Right lobe of liver (tissue), 6 donors: ENCODE measurements at regions of chr11 and their contacts with region 1.

Region 1: DNA sequence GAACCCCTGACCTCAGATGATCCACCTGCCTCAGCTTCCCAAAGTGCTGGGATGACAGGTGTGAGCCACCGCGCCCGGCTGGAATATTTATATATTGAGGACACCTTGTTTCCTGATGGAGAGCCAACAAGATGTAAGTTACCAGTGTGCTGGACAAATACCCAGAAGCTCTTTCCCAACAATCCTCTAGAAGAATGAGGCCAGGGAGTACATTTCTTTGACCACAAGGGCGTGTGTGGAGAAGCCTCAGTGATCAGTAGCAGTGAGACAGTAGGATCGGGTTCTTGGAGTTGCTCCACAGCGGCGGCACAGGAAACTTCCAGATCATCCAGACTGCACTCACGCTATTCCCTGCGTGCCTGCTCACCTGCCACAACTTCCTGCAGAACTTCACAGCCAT is 10.3 kb upstream of the POLA2 start:
- DNase-seq: peak in 1 of 3 donors; percentile 38
- ATAC-seq: no peak
- H3K4me3 ChIP-seq: no peak overlapping the region
- H3K27ac ChIP-seq: no peak overlapping the region
- H3K4me1 ChIP-seq: peaks cover 0 to 15% (median 1%) of the 10 kb centered on the region in 4 donors
- H3K27me3 ChIP-seq: no peaks in the 10 kb centered on the region
- CTCF ChIP-seq: no peak
- POLR2A ChIP-seq: no peak

Region 2: DNA sequence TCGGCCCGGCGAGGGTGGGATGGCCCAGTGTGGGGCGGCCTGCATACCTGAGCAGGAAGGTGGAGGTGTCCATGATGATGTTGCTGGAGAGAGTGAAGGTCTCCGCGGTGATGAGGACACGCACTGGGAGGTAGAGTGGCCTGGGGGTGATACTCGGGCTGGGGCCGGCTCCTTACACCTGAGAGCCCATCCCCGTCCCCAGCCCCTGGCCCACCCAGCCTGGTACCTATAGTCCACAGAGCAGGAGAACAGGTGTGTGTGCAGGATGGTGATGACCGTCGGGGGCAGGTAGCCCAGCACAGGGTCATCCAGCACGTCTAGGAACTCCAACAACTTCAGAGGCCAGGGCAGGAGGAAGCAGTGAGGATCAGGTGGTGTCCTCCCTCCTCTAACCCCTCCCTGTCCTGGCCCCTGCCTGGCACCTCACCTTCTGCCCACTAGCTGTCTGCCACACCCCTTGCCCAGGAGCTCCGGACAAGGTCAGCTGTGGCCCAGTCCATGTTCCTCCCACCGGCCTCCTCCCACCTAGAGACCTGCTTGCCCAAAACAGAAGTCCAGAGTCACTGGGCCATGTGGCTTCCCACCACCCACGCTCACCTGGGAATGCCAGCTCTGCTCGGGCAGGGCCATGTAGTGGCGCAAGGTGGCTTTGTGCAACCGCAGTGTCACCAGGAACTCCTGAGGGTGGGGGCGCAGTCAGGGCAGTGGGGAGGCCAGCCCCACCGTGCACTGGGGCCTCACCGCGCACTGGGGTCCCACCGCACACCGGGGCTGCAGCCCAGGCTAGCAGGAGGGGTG is 345.8 kb before region 1 on chr11:
- intact Hi-C with region 1: no loop called
- DNase-seq: peak in 1 of 3 donors; percentile 47
- ATAC-seq: peak in 1 of 4 donors; percentile 30
- H3K4me3 ChIP-seq: no peak overlapping the region
- H3K27ac ChIP-seq: no peak overlapping the region
- H3K4me1 ChIP-seq: no peaks in the 10 kb centered on the region
- H3K27me3 ChIP-seq: no peaks in the 10 kb centered on the region
- CTCF ChIP-seq: no peak
- POLR2A ChIP-seq: no peak

Region 3: GRCh38 chr11:65111744-65112414 is 139.6 kb before region 1 on chr11 and contains the start of gene TM7SF2:
- intact Hi-C with region 1: loop called in 1 of 2 experiments (anchors 5 kb)
- DNase-seq: peak; percentile 98 to 99 (median 98)
- ATAC-seq: peak; percentile 80 to 89 (median 84)
- H3K4me3 ChIP-seq: peak within 1 kb of the TSS; percentile 54 to 62 (median 54)
- H3K27ac ChIP-seq: peak within 1 kb of the TSS; percentile 28 to 93 (median 69)
- H3K4me1 ChIP-seq: peaks cover 0 to 44% (median 24%) of the 10 kb centered on the region in 4 donors
- H3K27me3 ChIP-seq: no peaks in the 10 kb centered on the region
- CTCF ChIP-seq: no peak
- POLR2A ChIP-seq: peak; percentile 96
- total RNA-seq, gene TM7SF2: 25.6 to 112 (median 37.8) TPM

Region 4: DNA sequence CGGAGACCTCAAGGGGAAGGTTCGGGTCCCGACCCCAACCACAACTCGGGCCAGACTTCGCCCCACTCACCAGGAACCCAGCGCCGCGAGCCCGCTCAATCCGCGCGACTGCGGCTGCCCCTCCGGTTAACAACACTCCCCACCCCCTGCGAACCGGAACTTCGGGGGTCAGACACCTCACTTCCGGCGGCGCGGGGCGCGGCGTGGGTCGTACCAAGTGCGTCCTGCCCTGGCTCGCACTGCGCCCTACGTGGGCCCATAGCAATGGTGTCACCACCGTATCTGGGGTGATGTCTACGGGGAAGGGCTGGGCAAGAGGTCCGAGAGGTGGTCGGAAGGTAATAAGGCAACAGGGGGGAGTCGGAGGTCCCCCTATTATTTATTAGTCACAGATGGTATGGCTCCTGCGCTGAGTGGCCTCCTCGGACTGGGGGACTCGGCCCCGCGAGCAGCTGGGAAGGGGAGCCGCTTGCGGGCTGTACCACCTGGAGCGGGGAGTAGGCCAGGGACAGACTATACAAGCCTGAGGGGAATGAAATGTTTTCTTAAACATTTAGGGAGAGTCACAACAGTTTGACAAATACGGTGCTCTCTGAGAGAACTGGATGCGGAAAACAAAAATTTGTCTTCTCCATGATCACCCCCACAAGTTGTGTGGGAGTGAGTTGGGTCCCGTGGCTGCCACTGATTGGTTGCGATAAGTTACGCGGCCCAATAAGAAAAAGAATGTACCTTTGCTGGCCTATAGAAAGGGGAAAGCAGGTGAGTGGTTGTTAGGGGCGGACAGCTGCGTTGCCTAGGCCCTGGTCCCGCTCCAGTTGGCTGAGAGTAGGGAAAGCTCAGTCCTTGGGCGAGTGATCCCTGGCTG is 116.9 kb before region 1 on chr11 and contains the start of gene SYVN1:
- intact Hi-C with region 1: loop called in 1 of 2 experiments (anchors 10 kb)
- DNase-seq: peak; percentile 95 to 98 (median 97)
- ATAC-seq: peak; percentile 83 to 90 (median 86)
- H3K4me3 ChIP-seq: peak within 1 kb of the TSS; percentile 92 to 99 (median 99)
- H3K27ac ChIP-seq: peak within 1 kb of the TSS; percentile 96 to 99 (median 97)
- H3K4me1 ChIP-seq: peaks cover 0 to 25% (median 11%) of the 10 kb centered on the region in 4 donors
- H3K27me3 ChIP-seq: no peaks in the 10 kb centered on the region
- CTCF ChIP-seq: no peak
- POLR2A ChIP-seq: peak; percentile 97
- total RNA-seq, gene SYVN1: 73.0 to 120 (median 109) TPM

Region 5: DNA sequence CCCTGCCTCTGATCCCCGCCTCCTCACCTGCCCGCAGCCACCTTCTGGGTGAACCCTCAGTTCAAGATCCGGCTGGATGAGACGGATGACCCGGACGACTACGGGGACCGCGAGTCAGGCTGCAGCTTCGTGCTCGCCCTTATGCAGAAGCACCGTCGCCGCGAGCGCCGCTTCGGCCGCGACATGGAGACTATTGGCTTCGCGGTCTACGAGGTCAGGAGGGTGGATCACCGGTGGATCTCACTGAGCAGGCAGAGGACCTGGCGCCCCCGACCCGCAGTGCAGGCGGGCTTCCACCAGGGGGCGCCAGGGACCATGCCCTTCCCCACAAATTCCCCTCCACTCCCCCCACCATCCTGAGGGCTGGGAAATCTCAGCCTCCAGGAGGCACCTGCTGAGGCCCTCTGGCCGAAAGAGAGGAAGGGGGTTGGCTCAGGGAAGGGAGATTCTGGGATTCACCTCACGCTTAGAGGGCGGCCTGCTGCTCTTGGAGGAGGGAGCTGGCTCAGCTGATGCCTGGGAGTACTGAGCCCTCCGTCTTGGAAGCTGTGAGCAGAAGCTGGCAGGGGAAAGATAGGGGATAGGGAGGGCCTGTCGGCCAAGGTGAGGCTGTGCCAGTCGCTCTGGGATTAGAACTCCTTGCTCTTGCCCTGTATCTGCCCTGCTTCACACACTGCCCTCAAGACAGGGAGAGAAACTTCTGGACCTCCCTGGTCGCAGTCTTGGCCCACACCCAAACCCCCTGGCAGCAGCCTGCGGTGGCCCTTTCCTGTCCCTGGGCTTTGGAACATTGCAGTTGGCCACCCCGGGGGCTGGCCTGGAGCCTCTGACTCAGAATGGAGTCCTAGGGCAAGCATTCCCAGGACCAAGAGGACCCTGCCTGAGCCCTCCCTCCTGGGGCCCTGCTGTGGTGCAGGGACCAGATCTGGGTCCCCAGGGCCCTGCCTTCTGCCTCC is 46.6 kb before region 1 on chr11:
- intact Hi-C with region 1: loop called in 1 of 2 experiments (anchors 10 kb)
- DNase-seq: peak in 1 of 3 donors; percentile 53
- ATAC-seq: peak; percentile 62 to 79 (median 73)
- H3K4me3 ChIP-seq: no peak overlapping the region
- H3K27ac ChIP-seq: no peak overlapping the region
- H3K4me1 ChIP-seq: peaks cover 0 to 18% (median 1%) of the 10 kb centered on the region in 4 donors
- H3K27me3 ChIP-seq: no peaks in the 10 kb centered on the region
- CTCF ChIP-seq: peak; percentile 81 to 95 (median 90)
- POLR2A ChIP-seq: no peak